Heart right ventricle (tissue), 16 donors: ENCODE measurements at regions of chr9 and their contacts with region 1.

Region 1: DNA sequence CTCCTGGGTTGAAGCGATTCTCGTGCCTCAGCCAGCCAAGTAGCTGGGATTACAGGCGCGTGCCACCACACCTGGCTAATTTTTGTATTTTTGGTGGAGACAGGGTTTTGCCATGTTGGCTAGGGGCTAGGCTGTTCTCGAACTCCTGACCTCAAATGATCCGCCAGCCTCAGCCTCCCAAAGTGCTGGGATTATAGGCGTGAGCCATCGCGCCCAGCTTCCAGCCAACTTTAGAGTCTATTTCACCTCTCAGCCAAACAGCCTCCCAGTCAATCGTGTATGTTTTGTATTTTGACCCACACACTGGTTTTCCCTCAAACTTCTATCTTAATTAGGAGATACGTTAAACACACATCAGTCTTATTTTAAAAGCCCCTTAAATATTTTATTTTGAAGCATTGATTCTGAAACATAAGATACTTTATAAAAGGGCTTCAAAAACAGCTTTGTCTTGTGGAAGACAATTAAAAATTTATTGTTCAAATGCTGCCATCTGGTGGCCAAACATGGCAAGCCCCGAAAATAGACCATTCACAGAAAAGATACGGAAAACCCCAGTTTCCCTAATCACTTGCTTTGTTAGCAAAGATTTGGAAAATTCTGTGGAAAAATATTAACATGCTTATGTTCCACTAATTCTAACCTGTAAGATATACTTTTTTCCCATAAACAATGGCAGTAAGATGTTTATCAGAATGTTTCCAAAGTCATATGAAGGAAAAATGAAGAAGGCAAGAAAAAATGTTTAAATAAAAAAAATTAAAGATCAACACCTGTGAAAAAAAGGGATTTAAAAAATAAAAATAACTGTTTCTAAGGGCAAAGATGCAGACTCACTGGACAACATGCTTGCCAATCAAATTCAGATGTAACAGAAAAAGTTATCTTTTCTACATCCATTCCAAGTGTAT is 33.1 kb downstream of the APTX start:
- DNase-seq: peak; percentile 35 to 46
- ATAC-seq: no peak
- H3K4me3 ChIP-seq: no peak overlapping the region
- H3K27ac ChIP-seq: no peak overlapping the region
- H3K4me1 ChIP-seq: no peaks in the 10 kb centered on the region
- H3K27me3 ChIP-seq: no peaks in the 10 kb centered on the region
- CTCF ChIP-seq: peak; percentile 73 to 91 (median 85)

Region 2: DNA sequence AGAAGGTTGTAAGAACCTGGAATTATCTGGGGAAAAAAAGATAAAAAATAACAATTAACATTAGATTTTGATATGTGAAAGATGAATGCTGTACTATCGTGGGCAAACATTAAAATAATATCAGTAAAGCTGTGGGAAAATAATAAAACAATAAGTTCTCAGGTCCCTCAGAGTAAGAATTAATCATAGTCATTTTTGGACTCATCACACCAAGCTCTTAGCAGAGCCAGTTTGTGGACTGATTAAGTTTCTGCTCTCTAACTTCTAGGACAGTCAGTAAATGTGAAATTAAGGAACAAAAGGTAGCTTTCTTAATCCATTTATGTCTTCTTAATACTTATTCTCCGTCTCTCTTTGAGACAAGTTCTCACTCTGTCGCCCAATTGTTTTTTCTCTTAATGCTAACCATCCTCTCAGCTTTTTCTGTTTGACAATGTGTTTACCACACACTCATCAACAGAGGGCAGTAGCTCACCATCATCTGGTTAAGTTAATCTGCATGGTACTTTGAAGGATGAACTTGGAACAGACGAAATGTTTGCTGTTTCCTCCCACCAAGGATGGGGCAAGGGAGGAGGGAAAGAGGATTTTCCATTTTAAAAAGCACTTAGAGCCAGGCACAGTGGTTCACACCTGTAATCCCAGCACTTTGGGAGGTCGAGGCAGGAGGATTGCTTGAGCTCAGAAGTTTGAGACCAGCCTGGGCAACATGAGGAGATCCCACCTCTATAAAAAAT is 589.2 kb before region 1 on chr9:
- intact Hi-C with region 1: loop called (anchors 2 to 10 kb)
- DNase-seq: peak in 1 of 2 donors; percentile 47
- ATAC-seq: peak; percentile 72 to 91 (median 82)
- H3K4me3 ChIP-seq: no peak overlapping the region
- H3K27ac ChIP-seq: no peak overlapping the region
- H3K4me1 ChIP-seq: peaks cover 0 to 19% (median 6%) of the 10 kb centered on the region in 9 donors
- H3K27me3 ChIP-seq: peaks cover 0 to 13% (median 0%) of the 10 kb centered on the region in 7 donors
- CTCF ChIP-seq: peak; percentile 62 to 92 (median 81)

Region 3: GRCh38 chr9:32579706-32580331 is 388.5 kb before region 1 on chr9:
- intact Hi-C with region 1: loop called in 6 of 10 experiments (anchors 2 to 5 kb)
- DNase-seq: peak; percentile 60 to 67
- ATAC-seq: peak in 1 of 8 donors; percentile 57
- H3K4me3 ChIP-seq: peak overlapping the region in 1 of 10 donors; percentile 11
- H3K27ac ChIP-seq: no peak overlapping the region
- H3K4me1 ChIP-seq: peaks cover 0 to 4% (median 0%) of the 10 kb centered on the region in 9 donors
- H3K27me3 ChIP-seq: peaks cover 0 to 28% (median 3%) of the 10 kb centered on the region in 7 donors
- CTCF ChIP-seq: peak; percentile 87 to 97 (median 92)

Region 4: DNA sequence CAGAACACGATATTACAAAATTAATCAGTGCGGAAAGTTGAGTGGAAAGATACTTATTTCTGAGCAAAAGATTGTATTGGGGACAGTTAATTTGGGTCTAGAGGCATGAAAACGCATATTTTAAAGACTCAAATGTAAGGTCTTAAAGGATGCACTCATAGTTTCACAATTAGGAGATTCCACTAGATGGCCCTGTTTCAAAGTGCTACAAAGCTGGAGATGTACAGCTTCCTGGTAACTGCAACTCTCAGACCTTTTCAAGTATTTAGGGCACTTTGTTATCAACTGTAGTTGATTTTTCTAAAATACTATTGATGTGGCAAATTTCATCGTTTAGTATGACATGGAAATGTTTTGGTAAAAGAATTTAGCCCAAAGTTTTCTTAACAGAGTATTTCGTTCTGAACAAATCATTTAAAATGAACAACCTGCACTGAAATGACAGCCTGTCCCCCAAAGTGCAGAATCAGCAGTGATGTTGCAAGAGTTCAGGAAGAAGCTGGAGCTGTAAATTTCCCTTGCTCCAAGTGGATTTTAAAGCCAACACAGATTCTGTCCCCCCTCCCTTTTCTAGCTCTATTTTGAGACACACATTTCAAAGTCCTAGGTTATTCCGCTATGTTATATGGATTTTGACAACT is 379.2 kb before region 1 on chr9:
- intact Hi-C with region 1: loop called in 8 of 10 experiments (anchors 1 to 5 kb)
- DNase-seq: no peak
- ATAC-seq: peak in 1 of 8 donors; percentile 55
- H3K4me3 ChIP-seq: no peak overlapping the region
- H3K27ac ChIP-seq: no peak overlapping the region
- H3K4me1 ChIP-seq: no peaks in the 10 kb centered on the region
- H3K27me3 ChIP-seq: peaks cover 0 to 25% (median 17%) of the 10 kb centered on the region in 7 donors
- CTCF ChIP-seq: peak in 7 of 9 donors; percentile 38 to 63 (median 48)

Region 5: GRCh38 chr9:32764140-32764539 is 204.2 kb before region 1 on chr9:
- intact Hi-C with region 1: loop called in 1 of 10 experiments (anchors 10 kb)
- DNase-seq: no peak
- ATAC-seq: no peak
- H3K4me3 ChIP-seq: no peak overlapping the region
- H3K27ac ChIP-seq: no peak overlapping the region
- H3K4me1 ChIP-seq: no peaks in the 10 kb centered on the region
- H3K27me3 ChIP-seq: no peaks in the 10 kb centered on the region
- CTCF ChIP-seq: no peak

Region 6: GRCh38 chr9:32906213-32906612 is 62.1 kb before region 1 on chr9:
- intact Hi-C with region 1: no loop called
- DNase-seq: no peak
- ATAC-seq: no peak
- H3K4me3 ChIP-seq: no peak overlapping the region
- H3K27ac ChIP-seq: no peak overlapping the region
- H3K4me1 ChIP-seq: no peaks in the 10 kb centered on the region
- H3K27me3 ChIP-seq: peaks cover 0 to 62% (median 0%) of the 10 kb centered on the region in 7 donors
- CTCF ChIP-seq: no peak